Mammary epithelial cell (primary cell): ENCODE measurements at regions of chrX and their contacts with region 1.

Region 1: GRCh38 chrX:57595381-57595811 is 3.6 kb downstream of the ZXDB start:
- DNase-seq: peak; percentile 77
- H3K4me3 ChIP-seq: peak overlapping the region in 2 of 3 experiments; percentile 30 to 38
- H3K27ac ChIP-seq: peak overlapping the region; percentile 76
- H3K4me1 ChIP-seq: peaks cover 15% of the 10 kb centered on the region
- H3K27me3 ChIP-seq: no peaks in the 10 kb centered on the region
- CTCF ChIP-seq: no peak

Region 2: GRCh38 chrX:57906790-57907189 is 311.4 kb after region 1 on chrX:
- CTCF ChIA-PET with region 1: no interaction called
- dilution Hi-C with region 1: no loop called
- in situ Hi-C with region 1: loop called (anchors 25 kb)
- intact Hi-C with region 1: loop called (anchors 5 kb)
- DNase-seq: peak; percentile 24
- H3K4me3 ChIP-seq: no peak overlapping the region
- H3K27ac ChIP-seq: no peak overlapping the region
- H3K4me1 ChIP-seq: no peaks in the 10 kb centered on the region
- H3K27me3 ChIP-seq: no peaks in the 10 kb centered on the region
- CTCF ChIP-seq: no peak

Region 3: GRCh38 chrX:57918750-57919436 is 323.5 kb after region 1 on chrX:
- CTCF ChIA-PET with region 1: interaction called, 5 read pairs
- dilution Hi-C with region 1: no loop called
- in situ Hi-C with region 1: loop called (anchors 25 kb)
- intact Hi-C with region 1: loop called (anchors 5 kb)
- DNase-seq: no peak
- H3K4me3 ChIP-seq: no peak overlapping the region
- H3K27ac ChIP-seq: no peak overlapping the region
- H3K4me1 ChIP-seq: no peaks in the 10 kb centered on the region
- H3K27me3 ChIP-seq: peaks cover 2% of the 10 kb centered on the region
- CTCF ChIP-seq: peak; percentile 37 to 51